Activated CD4-positive, alpha-beta memory T cell treated with anti-CD3 and anti-CD28 coated beads, Interleukin-2, amount 10 ng/mL, durations not matched to agents 7 days and 5 days (primary cell): ENCODE measurements at regions of chr4 and their contacts with region 1.

Region 1: GRCh38 chr4:52659001-52659721 is at the start of gene USP46:
- DNase-seq: peak; percentile 62
- H3K4me3 Mint-ChIP-seq: peak within 1 kb of the TSS; percentile 77
- H3K27ac Mint-ChIP-seq: peak within 1 kb of the TSS; percentile 67
- H3K4me1 Mint-ChIP-seq: peaks cover 28% of the 10 kb centered on the region
- H3K27me3 Mint-ChIP-seq: no peaks in the 10 kb centered on the region
- total RNA-seq, gene USP46: 13.1 to 15.0 TPM

Region 2: GRCh38 chr4:52588097-52588782 is 70.9 kb before region 1 on chr4:
- CTCF ChIA-PET with region 1: interaction called, 10 read pairs
- POLR2A ChIA-PET with region 1: interaction called, 14 read pairs
- DNase-seq: peak; percentile 36
- H3K4me3 Mint-ChIP-seq: no peak overlapping the region
- H3K27ac Mint-ChIP-seq: peak overlapping the region; percentile 81
- H3K4me1 Mint-ChIP-seq: peaks cover 40% of the 10 kb centered on the region
- H3K27me3 Mint-ChIP-seq: peaks cover 4% of the 10 kb centered on the region

Region 3: DNA sequence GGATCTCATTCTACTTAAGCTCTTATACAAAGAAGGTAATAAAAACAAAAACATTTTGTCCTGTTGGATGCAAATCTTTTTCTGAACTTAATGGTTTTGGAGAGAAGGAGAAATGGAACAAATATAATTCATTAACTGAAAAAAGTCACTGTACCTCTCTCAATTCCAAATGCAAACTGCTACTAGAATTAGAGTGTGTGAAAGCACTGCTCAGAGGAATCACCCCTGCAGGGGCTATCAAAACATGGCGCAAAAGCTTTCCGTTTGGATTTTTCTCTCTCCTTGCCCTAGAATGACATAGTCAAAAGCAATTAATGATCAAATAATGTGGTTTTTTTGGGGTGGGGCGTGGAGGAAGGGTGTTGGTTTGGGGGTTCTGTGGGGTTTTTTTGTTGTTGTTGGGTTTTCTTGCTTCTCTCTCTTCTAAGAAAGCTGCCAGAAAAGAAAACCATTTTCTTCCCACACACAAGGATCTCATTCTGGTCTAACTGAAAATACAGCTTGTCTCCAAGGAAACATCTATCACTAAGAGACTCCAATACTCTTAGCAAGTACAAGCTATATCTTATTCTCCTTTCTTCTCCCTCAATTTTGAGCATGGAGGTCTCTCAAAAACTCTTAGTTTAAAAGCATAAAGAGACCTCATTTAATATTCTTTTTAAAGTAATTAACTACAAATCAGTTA is 41.7 kb before region 1 on chr4:
- CTCF ChIA-PET with region 1: interaction called, 7 read pairs
- POLR2A ChIA-PET with region 1: interaction called, 13 read pairs
- DNase-seq: peak; percentile 30
- H3K4me3 Mint-ChIP-seq: no peak overlapping the region
- H3K27ac Mint-ChIP-seq: peak overlapping the region; percentile 58
- H3K4me1 Mint-ChIP-seq: peaks cover 38% of the 10 kb centered on the region
- H3K27me3 Mint-ChIP-seq: no peaks in the 10 kb centered on the region

Region 4: GRCh38 chr4:52728691-52729240 is 69.6 kb after region 1 on chr4:
- CTCF ChIA-PET with region 1: no interaction called
- POLR2A ChIA-PET with region 1: no interaction called
- DNase-seq: no peak
- H3K4me3 Mint-ChIP-seq: no peak overlapping the region
- H3K27ac Mint-ChIP-seq: no peak overlapping the region
- H3K4me1 Mint-ChIP-seq: no peaks in the 10 kb centered on the region
- H3K27me3 Mint-ChIP-seq: no peaks in the 10 kb centered on the region